Activated CD8-positive, alpha-beta T cell treated with anti-CD3 and anti-CD28 coated beads, Interleukin-2, amount 10 ng/mL, durations not matched to agents 7 days and 5 days (primary cell): ENCODE measurements at regions of chr15 and their contacts with region 1.

Region 1: GRCh38 chr15:96327155-96327741 is 3.3 kb upstream of the NR2F2 start:
- DNase-seq: no peak
- ATAC-seq: no peak
- H3K4me3 Mint-ChIP-seq: no peak overlapping the region
- H3K27ac Mint-ChIP-seq: no peak overlapping the region
- H3K4me1 Mint-ChIP-seq: peaks cover 8% of the 10 kb centered on the region
- H3K27me3 Mint-ChIP-seq: peaks cover 77% of the 10 kb centered on the region

Region 2: DNA sequence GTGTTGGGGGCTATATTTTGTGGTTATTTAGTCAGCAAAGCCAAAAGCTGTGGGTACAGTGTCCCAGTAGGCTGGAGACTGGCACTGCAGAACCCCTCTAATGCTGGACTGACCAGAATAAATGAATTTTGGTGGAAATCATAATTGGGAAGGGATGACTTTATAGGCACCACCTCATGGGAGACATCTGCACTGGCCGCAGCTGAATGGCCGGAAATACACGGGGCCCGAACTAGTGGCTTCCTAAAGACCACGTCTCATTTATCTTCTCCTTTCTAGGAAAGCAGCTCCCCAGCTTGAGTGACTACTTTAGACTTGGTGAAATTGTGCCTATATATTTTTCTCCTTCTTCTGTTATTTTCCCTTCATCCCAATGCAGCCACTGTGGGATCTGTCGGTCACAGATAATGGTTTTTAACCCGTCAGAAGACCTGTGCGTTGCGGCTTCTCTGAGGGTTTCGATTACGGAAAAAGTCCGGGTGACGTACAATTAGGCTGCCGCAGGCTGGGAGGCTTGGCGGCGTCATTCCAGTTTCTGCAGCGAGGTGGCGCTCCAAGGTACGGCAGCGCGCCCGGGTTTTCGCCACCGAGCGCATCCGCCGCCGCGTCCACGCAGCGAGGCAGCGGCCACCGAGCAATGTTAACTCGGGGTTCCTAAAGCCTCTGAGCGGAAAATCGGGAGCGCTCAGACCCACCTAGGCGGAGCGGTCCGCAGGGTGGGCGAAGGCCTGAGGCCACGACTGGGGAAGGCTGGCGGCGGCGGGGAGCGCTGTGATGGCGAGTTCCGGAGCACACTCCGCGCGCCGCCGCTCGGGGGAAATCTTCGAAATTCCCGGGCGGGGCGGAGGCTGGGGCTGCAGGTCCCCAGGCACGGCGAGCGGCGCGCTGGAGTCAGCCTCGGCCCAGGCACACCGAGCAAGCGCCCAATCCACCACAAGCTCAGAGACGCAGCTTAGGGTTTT is 29.5 kb after region 1 on chr15:
- CTCF ChIA-PET with region 1: interaction called, 16 read pairs
- POLR2A ChIA-PET with region 1: no interaction called
- DNase-seq: peak; percentile 84
- ATAC-seq: peak; percentile 69
- H3K4me3 Mint-ChIP-seq: peak overlapping the region; percentile 80
- H3K27ac Mint-ChIP-seq: peak overlapping the region; percentile 67
- H3K4me1 Mint-ChIP-seq: peaks cover 23% of the 10 kb centered on the region
- H3K27me3 Mint-ChIP-seq: peaks cover 59% of the 10 kb centered on the region